Activated CD4-positive, alpha-beta memory T cell treated with anti-CD3 and anti-CD28 coated beads for 36 hours (primary cell): ENCODE measurements at regions of chr2 and their contacts with region 1.

Region 1: DNA sequence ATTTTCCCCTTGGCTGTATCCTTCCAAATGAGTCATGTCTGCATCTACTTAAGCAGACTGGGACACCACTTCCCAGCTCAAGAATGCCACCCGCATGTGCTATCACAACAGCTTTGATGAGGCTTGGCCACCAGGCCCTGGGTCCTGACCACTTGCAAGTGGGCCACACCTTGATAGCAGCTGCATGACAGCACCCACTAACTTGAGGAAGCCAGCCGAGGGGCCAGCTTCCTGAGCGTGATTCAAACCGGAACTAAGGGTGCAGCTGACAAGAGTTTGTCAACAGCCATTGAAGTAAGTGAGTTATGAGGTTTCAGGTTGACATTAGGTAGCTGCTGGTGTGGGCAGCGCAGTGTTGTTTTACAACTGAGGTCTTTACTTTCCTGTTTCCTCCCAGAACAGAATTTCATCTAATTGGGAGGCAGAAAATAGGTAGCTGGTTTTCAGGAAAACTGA is 54.4 kb downstream of the EPHA4 start:
- DNase-seq: peak; percentile 89
- H3K4me3 Mint-ChIP-seq: no peak overlapping the region
- H3K27ac Mint-ChIP-seq: no peak overlapping the region
- H3K4me1 Mint-ChIP-seq: peaks cover 27% of the 10 kb centered on the region
- H3K27me3 Mint-ChIP-seq: no peaks in the 10 kb centered on the region

Region 2: GRCh38 chr2:221444106-221444505 is 73.6 kb before region 1 on chr2:
- CTCF ChIA-PET with region 1: no interaction called
- POLR2A ChIA-PET with region 1: no interaction called
- intact Hi-C with region 1: loop called (anchors 2 kb)
- DNase-seq: peak; percentile 19
- H3K4me3 Mint-ChIP-seq: no peak overlapping the region
- H3K27ac Mint-ChIP-seq: peak overlapping the region; percentile 10
- H3K4me1 Mint-ChIP-seq: peaks cover 8% of the 10 kb centered on the region
- H3K27me3 Mint-ChIP-seq: no peaks in the 10 kb centered on the region

Region 3: GRCh38 chr2:221502270-221503010 is 15.3 kb before region 1 on chr2:
- CTCF ChIA-PET with region 1: no interaction called
- POLR2A ChIA-PET with region 1: interaction called, 3 read pairs
- intact Hi-C with region 1: loop called (anchors 1 kb)
- DNase-seq: peak; percentile 67
- H3K4me3 Mint-ChIP-seq: no peak overlapping the region
- H3K27ac Mint-ChIP-seq: peak overlapping the region; percentile 64
- H3K4me1 Mint-ChIP-seq: peaks cover 42% of the 10 kb centered on the region
- H3K27me3 Mint-ChIP-seq: no peaks in the 10 kb centered on the region

Region 4: DNA sequence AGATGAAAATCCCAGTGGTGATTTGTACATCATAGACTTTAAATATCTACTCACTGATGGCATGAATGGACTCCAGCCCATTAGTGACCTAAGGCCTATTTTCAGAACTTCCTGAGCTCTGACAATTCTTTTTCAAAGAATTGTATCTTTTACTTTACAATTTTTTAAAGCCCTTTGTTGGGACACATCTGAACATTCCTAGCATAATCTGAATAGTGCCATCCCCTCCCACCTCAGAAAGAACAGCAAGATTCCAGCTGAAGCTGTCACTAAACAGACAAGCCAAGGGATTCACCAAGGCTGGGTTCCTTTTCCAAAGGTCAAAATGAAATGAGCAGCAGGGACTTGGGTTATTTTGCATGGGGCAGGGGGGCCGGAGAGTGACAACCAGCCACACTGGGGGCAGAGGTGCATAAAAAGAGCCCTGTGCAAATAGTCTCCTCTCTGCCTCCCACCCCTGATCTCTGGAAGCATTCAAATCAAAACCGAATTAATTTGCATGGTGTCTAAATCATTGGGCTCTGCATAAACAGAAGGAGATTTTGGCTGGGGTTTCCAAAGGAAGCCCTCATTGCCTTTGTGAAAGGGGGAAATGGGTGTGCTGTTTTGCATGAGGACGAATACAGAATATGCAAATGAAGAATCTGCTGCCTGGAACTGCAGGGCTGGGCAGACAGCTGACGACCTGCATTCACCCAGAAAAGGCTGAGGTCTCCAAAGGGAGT is 37.2 kb after region 1 on chr2:
- CTCF ChIA-PET with region 1: interaction called, 5 read pairs
- POLR2A ChIA-PET with region 1: interaction called, 3 read pairs
- intact Hi-C with region 1: loop called (anchors 1 kb)
- DNase-seq: peak; percentile 58
- H3K4me3 Mint-ChIP-seq: peak overlapping the region; percentile 50
- H3K27ac Mint-ChIP-seq: peak overlapping the region; percentile 77
- H3K4me1 Mint-ChIP-seq: peaks cover 62% of the 10 kb centered on the region
- H3K27me3 Mint-ChIP-seq: no peaks in the 10 kb centered on the region

Region 5: GRCh38 chr2:221596192-221596591 is 78.5 kb after region 1 on chr2:
- CTCF ChIA-PET with region 1: no interaction called
- POLR2A ChIA-PET with region 1: no interaction called
- intact Hi-C with region 1: no loop called
- DNase-seq: no peak
- H3K4me3 Mint-ChIP-seq: no peak overlapping the region
- H3K27ac Mint-ChIP-seq: no peak overlapping the region
- H3K4me1 Mint-ChIP-seq: no peaks in the 10 kb centered on the region
- H3K27me3 Mint-ChIP-seq: peaks cover 11% of the 10 kb centered on the region